Activated CD8-positive, alpha-beta T cell treated with anti-CD3 and anti-CD28 coated beads, Interleukin-2, amount 10 ng/mL, durations not matched to agents 7 days and 5 days (primary cell): ENCODE measurements at regions of chr19 and their contacts with region 1.

Region 1: GRCh38 chr19:40806488-40807468 is 7.8 kb downstream of the EGLN2 start:
- DNase-seq: peak; percentile 86
- ATAC-seq: peak; percentile 56
- H3K4me3 Mint-ChIP-seq: peak overlapping the region; percentile 95
- H3K27ac Mint-ChIP-seq: peak overlapping the region; percentile 95
- H3K4me1 Mint-ChIP-seq: peaks cover 94% of the 10 kb centered on the region
- H3K27me3 Mint-ChIP-seq: peaks cover 3% of the 10 kb centered on the region

Region 2: GRCh38 chr19:40662921-40663694 is 143.7 kb before region 1 on chr19:
- CTCF ChIA-PET with region 1: interaction called, 47 read pairs
- POLR2A ChIA-PET with region 1: interaction called, 5 read pairs
- DNase-seq: peak; percentile 92
- ATAC-seq: peak; percentile 96
- H3K4me3 Mint-ChIP-seq: peak overlapping the region; percentile 78
- H3K27ac Mint-ChIP-seq: peak overlapping the region; percentile 81
- H3K4me1 Mint-ChIP-seq: peaks cover 7% of the 10 kb centered on the region
- H3K27me3 Mint-ChIP-seq: peaks cover 6% of the 10 kb centered on the region

Region 3: DNA sequence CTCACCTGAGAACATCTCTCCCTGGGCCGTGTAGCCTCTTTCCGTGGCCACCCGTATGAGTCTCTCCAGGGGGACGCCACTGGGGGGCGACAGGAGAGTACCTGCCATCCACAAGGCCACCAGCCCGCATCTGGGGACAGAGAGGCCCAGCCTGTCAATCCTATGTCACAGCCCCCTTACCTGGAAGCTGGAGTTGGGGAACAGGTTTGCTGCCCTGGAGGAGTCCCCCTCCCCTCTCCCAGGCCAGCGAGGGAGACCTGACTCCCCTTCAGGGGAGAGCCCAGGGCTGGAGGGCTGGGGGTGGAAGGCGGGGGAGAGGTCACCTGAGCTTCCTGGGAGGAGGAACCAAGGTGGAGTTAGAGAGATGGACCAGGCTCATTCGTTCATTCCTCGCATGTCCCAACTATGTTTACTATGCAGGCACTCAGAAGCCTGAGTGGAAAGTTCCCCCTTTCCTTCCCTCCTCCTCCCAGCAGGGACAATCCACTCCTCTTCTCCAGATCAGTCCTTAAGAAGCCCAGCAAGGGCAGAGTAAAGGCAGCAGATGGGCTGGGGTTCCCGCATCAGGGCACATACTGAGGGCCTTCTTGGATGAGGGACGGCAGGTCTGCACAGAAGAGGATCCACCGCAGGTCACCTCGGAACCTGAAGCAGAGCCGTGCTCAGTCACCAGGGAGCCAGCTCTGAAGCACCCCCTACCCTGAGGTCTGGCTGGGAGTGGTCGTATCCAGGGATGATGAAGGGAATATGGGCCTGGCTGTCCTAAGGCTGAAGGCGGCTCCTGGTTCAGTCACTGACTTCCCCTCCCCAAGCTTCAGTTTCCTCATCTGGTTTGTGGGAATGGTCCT is 62.0 kb before region 1 on chr19:
- CTCF ChIA-PET with region 1: interaction called, 11 read pairs
- POLR2A ChIA-PET with region 1: interaction called, 4 read pairs
- DNase-seq: peak; percentile 52
- ATAC-seq: peak; percentile 62
- H3K4me3 Mint-ChIP-seq: no peak overlapping the region
- H3K27ac Mint-ChIP-seq: no peak overlapping the region
- H3K4me1 Mint-ChIP-seq: peaks cover 11% of the 10 kb centered on the region
- H3K27me3 Mint-ChIP-seq: no peaks in the 10 kb centered on the region

Region 4: GRCh38 chr19:40777937-40778705 is 28.7 kb before region 1 on chr19 and contains the start of gene RAB4B:
- CTCF ChIA-PET with region 1: interaction called, 63 read pairs
- POLR2A ChIA-PET with region 1: interaction called, 35 read pairs
- DNase-seq: peak; percentile 100
- ATAC-seq: peak; percentile 87
- H3K4me3 Mint-ChIP-seq: peak within 1 kb of the TSS; percentile 91
- H3K27ac Mint-ChIP-seq: peak within 1 kb of the TSS; percentile 99
- H3K4me1 Mint-ChIP-seq: peaks cover 41% of the 10 kb centered on the region
- H3K27me3 Mint-ChIP-seq: no peaks in the 10 kb centered on the region
- total RNA-seq, gene RAB4B: 50.2 to 53.1 TPM